ENCODE measurements at regions of chr19 and their contacts with region 1.

Region 1: DNA sequence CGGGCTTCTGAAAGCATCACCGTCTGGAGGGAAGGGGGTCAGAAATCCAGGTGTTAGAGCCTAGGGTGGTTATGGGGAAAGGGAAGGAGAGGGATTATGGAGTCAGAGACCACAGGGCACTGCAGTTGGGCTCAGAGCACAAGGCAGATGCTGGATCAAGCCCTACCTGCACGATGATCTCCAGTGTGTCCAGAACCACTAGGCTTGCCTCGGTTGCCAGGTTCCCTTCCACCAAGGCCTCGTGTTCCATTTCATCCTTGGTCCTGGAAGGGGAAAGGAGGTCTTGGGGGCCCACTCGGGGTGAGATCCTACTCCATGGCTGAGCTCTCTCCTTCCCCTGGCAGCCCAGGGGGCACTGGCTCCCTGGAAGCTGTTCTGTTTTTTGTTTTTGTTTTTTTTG is 17.0 kb upstream of the KANK2 start:
- DNase-seq: no peak
- H3K4me3 ChIP-seq: no peak overlapping the region
- H3K27ac ChIP-seq: no peak overlapping the region
- H3K4me1 ChIP-seq: no peaks in the 10 kb centered on the region
- H3K27me3 ChIP-seq: no peaks in the 10 kb centered on the region
- CTCF ChIP-seq: no peak
- POLR2A ChIP-seq: no peak

Region 2: GRCh38 chr19:11240008-11240444 is 25.6 kb after region 1 on chr19:
- intact Hi-C with region 1: loop called (anchors 1 kb)
- DNase-seq: no peak
- H3K4me3 ChIP-seq: no peak overlapping the region
- H3K27ac ChIP-seq: no peak overlapping the region
- H3K4me1 ChIP-seq: no peaks in the 10 kb centered on the region
- H3K27me3 ChIP-seq: no peaks in the 10 kb centered on the region
- CTCF ChIP-seq: no peak
- POLR2A ChIP-seq: no peak

Region 3: GRCh38 chr19:12872941-12873890 is 1658.8 kb after region 1 on chr19:
- intact Hi-C with region 1: no loop called
- DNase-seq: peak in 1 of 2 donors; percentile 92
- H3K4me3 ChIP-seq: peak overlapping the region in 2 of 3 donors; percentile 49 to 58
- H3K27ac ChIP-seq: no peak overlapping the region
- H3K4me1 ChIP-seq: no peaks in the 10 kb centered on the region
- H3K27me3 ChIP-seq: no peaks in the 10 kb centered on the region
- CTCF ChIP-seq: no peak
- POLR2A ChIP-seq: no peak